Left ventricle myocardium inferior (tissue), 1 donor: ENCODE measurements at regions of chr17 and their contacts with region 1.

Region 1: DNA sequence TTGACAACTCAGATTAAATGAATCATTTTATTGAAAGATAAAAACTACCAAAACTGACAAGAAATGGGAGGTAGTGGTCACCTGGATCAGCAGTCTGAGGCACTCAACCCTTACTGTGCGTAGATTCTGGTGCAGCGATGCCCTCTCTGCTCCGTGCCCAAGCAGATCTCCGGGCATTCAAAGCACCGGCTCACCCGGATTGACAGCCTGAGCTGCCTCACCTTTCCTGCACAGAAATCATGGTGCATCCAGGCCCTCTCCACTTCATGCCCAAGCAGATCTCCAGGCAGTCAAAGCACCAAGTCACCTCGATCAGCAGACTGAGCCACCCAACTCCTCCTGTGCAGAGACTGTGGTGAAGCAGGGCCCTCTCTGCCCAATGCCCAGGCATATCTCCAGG is 196.8 kb downstream of the CA10 start:
- DNase-seq: no peak
- H3K4me3 ChIP-seq: no peak overlapping the region
- H3K27ac ChIP-seq: no peak overlapping the region
- H3K4me1 ChIP-seq: no peaks in the 10 kb centered on the region
- H3K27me3 ChIP-seq: no peaks in the 10 kb centered on the region
- CTCF ChIP-seq: no peak

Region 2: GRCh38 chr17:51335883-51336822 is 625.5 kb before region 1 on chr17:
- intact Hi-C with region 1: no loop called
- DNase-seq: no peak
- H3K4me3 ChIP-seq: no peak overlapping the region
- H3K27ac ChIP-seq: no peak overlapping the region
- H3K4me1 ChIP-seq: no peaks in the 10 kb centered on the region
- H3K27me3 ChIP-seq: peaks cover 37% of the 10 kb centered on the region
- CTCF ChIP-seq: no peak

Region 3: DNA sequence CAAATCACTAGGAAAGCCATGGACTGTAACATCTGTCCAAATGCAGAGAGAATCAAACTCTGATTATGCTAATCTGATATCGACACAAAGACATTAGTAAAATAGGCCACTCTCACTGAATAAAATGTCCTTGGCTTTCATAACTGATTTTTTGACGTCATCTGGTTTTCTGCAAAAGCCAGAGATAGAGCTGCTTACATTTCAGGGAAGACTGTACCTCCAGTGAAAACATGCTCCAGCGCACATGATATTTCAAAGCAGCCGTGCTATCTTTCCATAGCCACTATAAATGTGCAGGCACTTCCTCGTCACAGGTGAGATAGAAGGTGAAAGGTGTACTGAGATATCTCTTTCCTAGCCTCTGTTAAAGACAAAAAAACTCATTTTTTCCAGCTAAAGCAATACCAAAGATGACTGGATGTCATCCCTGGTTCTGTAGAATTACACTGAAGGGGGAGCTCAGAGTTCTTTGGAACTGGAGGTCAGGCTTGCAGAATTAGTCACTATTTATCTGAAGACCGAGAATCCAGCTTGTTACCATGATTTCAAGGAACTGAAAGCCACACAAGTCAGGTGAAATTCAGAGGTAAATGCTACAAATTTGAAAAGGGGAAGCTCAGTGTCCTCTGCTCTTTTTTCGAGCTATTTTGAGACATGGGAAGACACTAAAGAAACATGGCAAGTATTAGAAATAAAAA is 52.7 kb before region 1 on chr17:
- intact Hi-C with region 1: loop called (anchors 10 kb)
- DNase-seq: no peak
- H3K4me3 ChIP-seq: no peak overlapping the region
- H3K27ac ChIP-seq: no peak overlapping the region
- H3K4me1 ChIP-seq: no peaks in the 10 kb centered on the region
- H3K27me3 ChIP-seq: peaks cover 17% of the 10 kb centered on the region
- CTCF ChIP-seq: no peak